Activated B cell treated with CpG ODN at 0.5 μM for 24 hours (primary cell): ENCODE measurements at regions of chr2 and their contacts with region 1.

Region 1: GRCh38 chr2:57906152-57906732 is 140.4 kb upstream of the VRK2 start:
- DNase-seq: no peak
- ATAC-seq: peak; percentile 58
- H3K4me3 Mint-ChIP-seq: no peak overlapping the region
- H3K27ac Mint-ChIP-seq: peak overlapping the region; percentile 4
- H3K4me1 Mint-ChIP-seq: peaks cover 34% of the 10 kb centered on the region
- H3K27me3 Mint-ChIP-seq: no peaks in the 10 kb centered on the region
- CTCF ChIP-seq: peak; percentile 42

Region 2: DNA sequence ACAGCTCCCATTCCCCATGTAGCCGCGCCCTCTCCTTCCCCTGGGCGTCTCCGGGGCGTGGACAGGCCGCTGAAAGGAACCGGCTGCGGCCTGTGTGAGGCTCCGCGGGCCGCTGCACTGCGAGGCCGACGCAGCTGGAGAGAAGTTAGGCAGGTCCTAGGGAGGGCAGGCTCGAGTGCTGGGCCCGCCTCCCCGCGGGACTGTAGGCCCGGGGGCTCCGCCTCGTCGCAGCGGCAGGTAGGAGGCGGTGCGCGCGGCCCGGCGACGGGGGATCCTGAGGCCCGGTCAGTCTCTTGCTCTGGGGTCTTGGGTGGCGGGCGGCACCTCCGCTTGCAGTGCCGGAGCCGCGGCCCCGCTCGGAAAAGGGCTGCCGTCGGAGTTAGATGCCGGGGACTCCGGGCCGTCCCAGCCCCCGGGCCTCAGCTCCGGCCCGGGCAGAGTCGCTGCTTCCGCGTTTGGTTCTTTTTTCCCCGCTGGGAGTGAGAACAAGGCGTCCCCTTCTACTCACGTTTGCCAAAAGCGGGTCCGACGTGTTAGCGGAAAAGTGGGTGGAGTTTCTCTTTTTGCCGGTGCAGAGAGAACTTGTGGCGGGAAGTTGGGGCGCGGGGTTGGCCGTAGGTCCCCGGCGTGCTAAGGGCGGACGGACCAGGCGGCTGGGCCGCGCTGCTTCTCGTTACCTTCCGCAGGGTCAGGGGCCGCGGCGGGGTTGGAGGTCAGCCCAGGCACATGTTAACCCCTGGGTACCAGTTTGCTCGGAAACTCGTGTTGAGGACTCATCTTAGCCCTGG is 140.5 kb after region 1 on chr2 and contains the start of gene VRK2:
- CTCF ChIA-PET with region 1: interaction called, 6 read pairs
- POLR2A ChIA-PET with region 1: interaction called, 57 read pairs
- intact Hi-C with region 1: loop called (anchors 1 kb)
- DNase-seq: peak; percentile 87
- ATAC-seq: peak; percentile 91
- H3K4me3 Mint-ChIP-seq: peak within 1 kb of the TSS; percentile 91
- H3K27ac Mint-ChIP-seq: peak within 1 kb of the TSS; percentile 95
- H3K4me1 Mint-ChIP-seq: peaks cover 51% of the 10 kb centered on the region
- H3K27me3 Mint-ChIP-seq: no peaks in the 10 kb centered on the region
- CTCF ChIP-seq: no peak
- total RNA-seq, gene VRK2: 60.0 and 63.0 TPM in 2 replicates

Region 3: DNA sequence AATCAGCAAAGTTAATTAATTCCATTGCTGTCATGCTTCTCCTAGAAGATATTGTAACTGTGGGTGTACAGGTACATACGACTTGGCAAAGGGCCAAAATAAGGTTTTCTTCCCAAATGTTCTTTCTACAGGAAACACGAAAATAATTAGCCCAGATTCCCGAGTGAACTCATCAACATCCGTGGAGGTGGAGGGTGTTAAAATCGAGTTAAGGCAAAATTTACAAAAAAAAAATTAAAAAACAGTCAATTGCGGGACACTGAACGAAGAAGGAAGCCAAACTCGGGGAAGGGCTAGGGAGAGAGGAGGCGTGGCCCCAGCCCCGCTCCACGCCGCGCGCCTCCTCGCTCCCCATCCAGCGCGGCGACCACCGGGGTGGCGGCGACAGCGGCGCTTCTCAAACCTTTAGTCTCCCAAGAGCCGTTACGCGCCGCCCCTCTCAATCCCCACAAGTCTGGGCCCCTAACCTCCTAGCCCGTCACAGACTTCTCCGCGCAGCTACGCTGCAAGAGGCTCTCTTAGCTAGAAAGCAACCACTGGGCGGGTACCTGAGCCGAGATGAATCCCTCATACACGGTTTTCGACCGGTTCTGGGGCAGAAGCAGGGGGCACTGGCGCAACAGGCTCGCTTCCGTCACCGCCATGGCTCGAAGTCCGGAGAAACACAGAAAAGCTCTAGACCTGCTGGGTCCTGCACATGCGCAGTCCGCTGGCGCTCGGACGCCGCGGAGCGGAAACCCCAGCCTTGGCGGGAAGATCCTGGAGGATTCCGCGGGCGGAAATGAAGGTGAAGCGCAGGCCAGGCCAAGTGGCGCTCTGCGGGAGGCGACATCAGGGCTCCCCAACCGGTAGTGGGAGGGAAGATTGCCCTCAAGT is 334.7 kb after region 1 on chr2 and contains the start of gene FANCL:
- CTCF ChIA-PET with region 1: interaction called, 3 read pairs
- POLR2A ChIA-PET with region 1: interaction called, 4 read pairs
- intact Hi-C with region 1: loop called (anchors 1 kb)
- DNase-seq: peak; percentile 71
- ATAC-seq: peak; percentile 84
- H3K4me3 Mint-ChIP-seq: peak within 1 kb of the TSS; percentile 92
- H3K27ac Mint-ChIP-seq: peak within 1 kb of the TSS; percentile 86
- H3K4me1 Mint-ChIP-seq: peaks cover 36% of the 10 kb centered on the region
- H3K27me3 Mint-ChIP-seq: no peaks in the 10 kb centered on the region
- CTCF ChIP-seq: no peak
- total RNA-seq, gene FANCL: 17.8 and 18.4 TPM in 2 replicates

Region 4: DNA sequence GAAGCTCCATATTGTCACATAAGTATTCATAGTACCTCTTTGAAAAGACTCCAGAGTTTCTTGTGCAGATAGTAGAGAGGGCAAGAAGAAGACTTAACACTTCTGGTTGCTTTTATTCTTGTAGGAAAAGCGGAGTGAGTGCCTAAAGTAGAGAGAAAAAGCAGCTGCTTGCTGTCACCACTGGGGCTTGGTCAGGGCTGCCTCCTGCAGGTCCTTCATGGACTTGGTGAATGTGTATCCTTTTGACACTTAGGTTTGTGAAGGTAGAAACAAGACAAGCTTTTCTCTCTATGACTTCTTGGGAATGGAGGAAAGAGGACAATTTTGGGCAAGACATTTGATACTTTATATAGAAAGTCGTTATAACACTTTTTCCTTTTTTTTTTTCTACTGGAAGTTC is 647.7 kb after region 1 on chr2:
- CTCF ChIA-PET with region 1: no interaction called
- POLR2A ChIA-PET with region 1: no interaction called
- intact Hi-C with region 1: loop called (anchors 5 kb)
- DNase-seq: no peak
- ATAC-seq: no peak
- H3K4me3 Mint-ChIP-seq: no peak overlapping the region
- H3K27ac Mint-ChIP-seq: no peak overlapping the region
- H3K4me1 Mint-ChIP-seq: no peaks in the 10 kb centered on the region
- H3K27me3 Mint-ChIP-seq: peaks cover 2% of the 10 kb centered on the region
- CTCF ChIP-seq: no peak

Region 5: DNA sequence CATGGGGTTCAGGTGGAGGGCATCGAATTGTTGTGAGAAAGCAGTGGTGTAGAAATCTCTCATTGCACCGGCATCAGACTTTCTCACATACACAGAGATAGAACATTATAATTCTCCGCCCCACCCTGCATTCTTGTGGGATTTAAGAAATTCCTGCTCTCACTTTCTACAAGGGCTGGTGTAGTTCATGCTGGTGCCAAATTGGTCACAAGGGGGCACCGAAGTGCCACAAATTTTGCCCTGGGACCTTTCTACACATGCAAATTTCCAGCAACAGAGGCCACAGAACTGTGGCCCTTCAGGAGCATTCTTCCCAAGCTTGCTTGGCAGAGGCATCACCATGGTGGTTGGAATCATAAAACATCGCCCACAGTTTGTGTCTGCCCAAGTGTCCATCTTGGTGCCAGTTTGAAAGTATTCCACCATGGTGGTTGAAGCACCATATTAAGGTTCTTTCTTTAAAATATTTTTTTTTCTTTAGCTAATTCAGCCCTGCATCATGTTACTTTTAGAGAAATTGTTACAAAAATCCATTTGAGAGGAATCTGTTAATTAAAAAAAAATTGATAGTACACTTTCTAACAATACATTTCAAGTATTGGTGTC is 856.0 kb after region 1 on chr2:
- CTCF ChIA-PET with region 1: interaction called, 4 read pairs
- POLR2A ChIA-PET with region 1: no interaction called
- intact Hi-C with region 1: loop called (anchors 1 kb)
- DNase-seq: peak; percentile 37
- ATAC-seq: peak; percentile 75
- H3K4me3 Mint-ChIP-seq: no peak overlapping the region
- H3K27ac Mint-ChIP-seq: no peak overlapping the region
- H3K4me1 Mint-ChIP-seq: peaks cover 6% of the 10 kb centered on the region
- H3K27me3 Mint-ChIP-seq: no peaks in the 10 kb centered on the region
- CTCF ChIP-seq: peak; percentile 60

Region 6: DNA sequence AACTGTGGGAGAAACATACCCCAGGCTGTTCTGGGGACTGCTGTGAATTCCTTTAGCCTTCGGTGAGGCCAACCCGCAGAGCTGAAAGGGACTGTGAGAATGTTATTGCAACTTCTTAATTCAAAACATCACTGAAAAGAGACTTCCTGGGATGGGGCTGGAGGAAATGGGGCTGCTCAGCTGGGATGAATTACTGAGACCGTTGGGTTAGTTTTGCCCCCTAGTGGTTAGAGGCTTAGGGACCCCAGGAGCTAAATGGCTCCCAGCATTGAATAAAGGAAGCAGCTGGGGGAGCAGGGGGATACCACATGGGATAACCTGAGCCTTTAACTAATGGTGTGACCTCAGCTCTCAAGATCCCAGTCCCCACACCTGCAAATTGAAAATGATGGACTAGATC is 1276.0 kb after region 1 on chr2:
- CTCF ChIA-PET with region 1: no interaction called
- POLR2A ChIA-PET with region 1: no interaction called
- intact Hi-C with region 1: loop called (anchors 5 kb)
- DNase-seq: no peak
- ATAC-seq: no peak
- H3K4me3 Mint-ChIP-seq: no peak overlapping the region
- H3K27ac Mint-ChIP-seq: no peak overlapping the region
- H3K4me1 Mint-ChIP-seq: peaks cover 28% of the 10 kb centered on the region
- H3K27me3 Mint-ChIP-seq: peaks cover 5% of the 10 kb centered on the region
- CTCF ChIP-seq: no peak